Activated T-helper 2 cell treated with anti-CD3 and anti-CD28 coated beads, Interferon-gamma antibody, Interleukin-2, Interleukin-4, amounts not matched to agents 10 μg/mL and 5 μg/mL and 100 μg/mL, durations not matched to agents 14 hours and 24 hours and 36 hours (primary cell): ENCODE measurements at regions of chr3 and their contacts with region 1.

Region 1: DNA sequence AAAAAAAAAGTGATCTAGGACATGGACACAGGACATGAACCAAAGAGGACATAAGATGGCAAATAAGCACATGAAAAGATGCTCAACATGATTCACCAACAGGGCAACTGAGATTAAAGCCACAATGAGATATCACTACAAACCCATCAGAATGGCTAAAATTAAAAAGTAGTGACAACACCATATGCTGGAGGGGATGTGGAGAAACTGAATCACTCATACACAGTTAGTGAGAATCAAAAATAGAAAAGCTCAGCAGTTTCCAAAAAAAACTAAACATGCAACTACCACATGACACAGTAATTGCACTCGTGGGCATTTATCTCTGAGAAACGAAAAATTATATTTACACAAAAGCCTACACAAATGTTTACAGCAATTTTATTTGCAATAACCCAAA is 27.9 kb upstream of the ACKR4 start:
- DNase-seq: no peak
- H3K4me3 Mint-ChIP-seq: peak overlapping the region; percentile 1
- H3K27ac Mint-ChIP-seq: peak overlapping the region; percentile 90
- H3K4me1 Mint-ChIP-seq: peaks cover 24% of the 10 kb centered on the region
- H3K27me3 Mint-ChIP-seq: no peaks in the 10 kb centered on the region

Region 2: DNA sequence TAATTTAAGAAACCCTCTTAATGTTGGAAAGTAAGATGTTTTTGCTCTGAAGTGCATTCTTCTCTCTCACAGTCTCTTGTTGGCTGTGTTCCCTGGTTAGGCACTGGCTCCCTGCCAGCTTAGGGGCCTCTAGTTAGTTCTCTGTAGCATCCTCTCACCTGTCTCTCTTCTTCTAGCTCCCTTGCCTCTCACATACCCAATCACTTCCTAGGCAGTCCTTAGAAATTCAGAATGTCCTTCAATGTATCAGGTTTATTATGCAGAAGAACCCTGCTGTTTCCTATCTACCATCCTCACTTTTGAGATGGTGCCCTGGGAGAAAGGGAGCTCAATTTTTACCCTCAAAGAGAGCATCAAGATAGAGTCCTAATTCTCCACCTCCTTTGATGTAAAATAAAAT is 498.1 kb before region 1 on chr3:
- intact Hi-C with region 1: no loop called
- DNase-seq: no peak
- H3K4me3 Mint-ChIP-seq: no peak overlapping the region
- H3K27ac Mint-ChIP-seq: no peak overlapping the region
- H3K4me1 Mint-ChIP-seq: no peaks in the 10 kb centered on the region
- H3K27me3 Mint-ChIP-seq: no peaks in the 10 kb centered on the region

Region 3: DNA sequence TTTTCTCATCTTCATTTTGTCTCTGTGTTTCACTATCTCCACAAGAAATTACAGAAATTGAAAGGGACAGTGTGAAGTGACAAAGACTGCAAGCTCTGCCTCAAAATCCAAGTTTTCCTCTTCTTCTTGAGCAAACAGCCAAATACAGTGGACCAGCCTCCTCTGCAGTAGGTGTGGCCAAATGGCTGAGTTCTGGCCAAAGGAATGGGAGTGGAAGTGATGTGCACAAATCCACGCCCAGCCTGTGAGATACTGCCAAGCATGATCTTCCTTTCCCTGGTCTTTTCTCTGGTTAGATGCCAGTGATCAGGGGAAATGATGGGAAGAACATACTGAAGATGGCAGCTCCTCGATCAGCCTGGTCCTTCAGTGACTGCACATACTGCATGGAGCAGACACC is 423.3 kb before region 1 on chr3:
- intact Hi-C with region 1: no loop called
- DNase-seq: no peak
- H3K4me3 Mint-ChIP-seq: no peak overlapping the region
- H3K27ac Mint-ChIP-seq: no peak overlapping the region
- H3K4me1 Mint-ChIP-seq: no peaks in the 10 kb centered on the region
- H3K27me3 Mint-ChIP-seq: no peaks in the 10 kb centered on the region

Region 4: GRCh38 chr3:132504375-132504933 is 64.7 kb before region 1 on chr3:
- intact Hi-C with region 1: no loop called
- DNase-seq: no peak
- H3K4me3 Mint-ChIP-seq: no peak overlapping the region
- H3K27ac Mint-ChIP-seq: no peak overlapping the region
- H3K4me1 Mint-ChIP-seq: no peaks in the 10 kb centered on the region
- H3K27me3 Mint-ChIP-seq: no peaks in the 10 kb centered on the region

Region 5: GRCh38 chr3:132535575-132536441 is 33.3 kb before region 1 on chr3:
- intact Hi-C with region 1: loop called (anchors 1 kb)
- DNase-seq: peak; percentile 24
- H3K4me3 Mint-ChIP-seq: no peak overlapping the region
- H3K27ac Mint-ChIP-seq: peak overlapping the region; percentile 72
- H3K4me1 Mint-ChIP-seq: peaks cover 22% of the 10 kb centered on the region
- H3K27me3 Mint-ChIP-seq: no peaks in the 10 kb centered on the region

Region 6: GRCh38 chr3:132543036-132543739 is 26.0 kb before region 1 on chr3:
- intact Hi-C with region 1: loop called (anchors 1 kb)
- DNase-seq: no peak
- H3K4me3 Mint-ChIP-seq: peak overlapping the region; percentile 62
- H3K27ac Mint-ChIP-seq: peak overlapping the region; percentile 99
- H3K4me1 Mint-ChIP-seq: peaks cover 49% of the 10 kb centered on the region
- H3K27me3 Mint-ChIP-seq: no peaks in the 10 kb centered on the region